ENCODE measurements at regions of chr12 and their contacts with region 1.

Region 1: DNA sequence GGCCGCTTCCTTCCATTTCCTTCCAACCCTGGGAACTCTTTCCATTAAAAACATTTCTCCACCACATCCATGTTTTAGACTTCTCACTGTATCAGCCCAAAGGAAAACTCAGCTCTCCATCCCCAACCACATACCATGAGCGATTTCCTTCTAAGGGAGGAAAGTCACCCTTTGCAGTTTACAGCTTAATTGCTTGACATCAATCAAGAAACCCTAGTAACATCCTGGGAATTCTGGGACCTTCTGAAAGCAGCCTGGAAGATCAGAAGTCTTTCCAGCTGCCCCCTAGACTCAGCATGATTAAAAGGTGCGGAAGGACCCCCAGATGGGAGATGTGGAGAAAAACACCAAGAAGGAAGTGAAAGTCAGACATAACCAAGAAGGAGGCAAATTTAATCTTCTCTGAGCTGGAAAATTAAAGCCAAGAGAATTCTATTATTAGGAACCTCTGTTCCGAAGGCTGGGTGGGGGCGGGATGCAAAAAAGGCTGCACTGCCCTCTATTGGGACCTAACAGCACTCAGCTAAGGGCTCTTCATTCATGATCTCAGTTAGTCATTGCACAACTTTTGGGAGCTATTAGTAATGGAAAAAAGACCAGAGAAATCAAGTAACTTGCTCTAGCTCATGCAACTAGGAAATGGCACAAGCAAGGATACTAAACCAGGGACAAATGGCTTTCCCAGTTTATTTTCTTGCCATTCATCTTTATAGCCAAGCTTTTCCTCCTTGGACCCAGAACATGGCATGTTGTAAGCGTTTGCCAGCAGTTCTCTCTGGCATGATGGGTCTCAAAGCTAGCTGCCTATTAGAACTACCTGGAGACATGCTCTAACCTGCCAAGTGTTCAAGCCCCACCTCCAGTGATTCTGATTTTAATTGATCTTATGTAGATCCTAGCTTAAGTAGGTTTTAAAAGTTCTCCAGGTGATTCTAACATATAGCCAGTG is 73.1 kb upstream of the PLXNC1 start:
- DNase-seq: peak; percentile 75
- ATAC-seq: peak; percentile 90

Region 2: DNA sequence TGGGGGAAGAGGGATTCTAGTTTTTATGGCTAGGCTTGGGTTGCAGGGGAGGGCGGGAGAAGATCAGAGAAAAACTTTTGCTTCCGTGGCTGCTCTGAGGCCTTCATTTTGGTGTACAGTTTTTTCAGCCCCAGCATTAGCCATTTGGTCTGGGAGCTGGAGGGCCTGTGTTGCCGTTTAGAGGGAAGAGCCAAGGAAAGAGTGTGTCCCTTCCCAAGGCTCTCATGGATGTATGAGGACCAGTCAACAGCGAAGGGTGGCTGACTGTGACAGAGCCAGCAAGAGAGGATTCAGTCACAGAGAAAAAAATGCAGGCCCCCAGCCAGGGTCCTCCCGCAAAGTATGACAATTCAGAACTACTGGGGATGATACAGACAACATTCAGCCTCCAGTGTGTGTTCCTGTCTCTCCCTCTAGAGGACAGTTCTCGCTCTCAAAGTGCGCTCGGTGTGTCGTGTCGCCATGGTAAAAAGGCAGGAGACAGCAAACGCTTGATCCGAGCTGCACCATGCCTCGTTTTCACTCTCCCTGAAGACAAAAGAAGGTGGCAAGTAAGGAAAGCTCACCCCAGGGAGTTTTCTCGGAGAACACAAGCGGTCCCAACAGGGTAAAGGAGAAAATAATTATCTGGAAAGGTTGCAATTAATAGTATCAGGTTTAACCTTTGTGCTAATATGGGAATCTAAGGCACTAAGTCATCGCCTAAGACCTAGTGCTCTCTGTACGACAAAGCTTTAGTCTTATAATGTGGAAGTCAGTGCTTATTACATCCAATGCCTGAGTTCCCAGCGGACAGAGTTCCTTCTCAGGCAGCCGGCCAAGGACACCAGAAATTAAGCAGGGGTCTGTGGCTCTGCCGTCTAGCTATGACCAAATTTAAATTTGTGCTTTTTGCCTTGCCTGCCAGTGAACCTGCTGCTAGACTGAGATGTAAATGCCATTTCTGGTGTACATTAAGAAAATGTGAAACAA is 84.1 kb before region 1 on chr12:
- intact Hi-C with region 1: loop called (anchors 10 kb)
- DNase-seq: peak; percentile 49
- ATAC-seq: peak; percentile 96

Measured in Right ventricle myocardium superior (tissue), 1 donor.